B cell (primary cell): ENCODE measurements at regions of chr7 and their contacts with region 1.

Region 1: DNA sequence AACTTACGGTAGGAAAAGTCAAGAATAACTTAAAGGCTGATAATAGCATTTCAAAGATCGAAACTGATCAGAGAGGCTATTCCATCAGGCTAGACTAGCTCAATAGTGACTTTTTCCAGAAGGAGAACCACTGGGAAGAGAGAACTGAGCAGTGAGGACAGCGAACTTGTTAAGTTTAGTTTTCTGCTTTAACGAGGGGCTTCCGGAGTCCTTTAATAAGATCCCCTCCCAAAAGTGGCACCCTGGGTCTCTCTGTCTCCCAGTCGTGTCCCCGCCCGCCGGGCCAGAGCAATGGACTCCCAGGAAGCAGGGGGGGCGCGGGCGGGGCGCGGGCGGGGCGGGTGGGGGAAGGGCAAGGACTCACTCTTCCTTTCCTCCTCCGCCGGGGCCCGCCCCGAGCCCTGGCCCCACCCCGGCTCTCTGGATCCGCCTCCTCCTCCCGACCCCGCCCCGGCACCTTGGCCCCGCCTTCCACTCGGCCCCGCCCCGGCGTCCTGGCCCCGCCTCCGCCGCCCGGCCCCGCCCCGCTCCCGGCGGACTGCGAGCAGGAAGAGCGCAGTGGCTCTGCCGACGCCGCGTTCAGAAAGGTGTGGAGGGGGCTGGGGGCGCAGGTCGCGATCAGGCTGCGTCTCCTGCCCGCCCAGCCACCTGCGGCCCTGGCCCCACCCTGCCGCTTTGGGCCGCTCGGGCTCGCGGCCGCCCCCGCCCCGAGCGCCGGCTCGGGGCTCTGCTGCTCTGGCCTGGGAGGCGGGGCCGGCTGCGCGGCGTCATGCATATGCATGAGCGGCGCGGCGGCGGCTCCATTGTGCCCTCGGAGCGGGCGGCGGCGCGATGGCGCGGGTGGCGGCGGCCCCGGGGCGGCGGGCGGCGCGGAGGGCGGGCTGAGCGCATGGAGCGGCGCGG is at the start of gene ZMIZ2:
- DNase-seq: peak; percentile 96
- ATAC-seq: peak; percentile 80
- H3K4me3 ChIP-seq: peak within 1 kb of the TSS; percentile 61 to 89 (median 74)
- H3K4me3 Mint-ChIP-seq: peak within 1 kb of the TSS; percentile 88
- H3K27ac ChIP-seq: peak within 1 kb of the TSS; percentile 96 to 97
- H3K27ac Mint-ChIP-seq: peak within 1 kb of the TSS; percentile 97
- H3K4me1 ChIP-seq: peaks cover 43 to 48% of the 10 kb centered on the region in 2 donors
- H3K4me1 Mint-ChIP-seq: peaks cover 51% of the 10 kb centered on the region
- H3K27me3 ChIP-seq: no peaks in the 10 kb centered on the region
- H3K27me3 Mint-ChIP-seq: no peaks in the 10 kb centered on the region
- CTCF ChIP-seq: no peak
- total RNA-seq, gene ZMIZ2: 442 and 446 TPM in 2 replicates

Region 2: GRCh38 chr7:44375236-44375699 is 373.0 kb before region 1 on chr7:
- CTCF ChIA-PET with region 1: no interaction called
- POLR2A ChIA-PET with region 1: no interaction called
- intact Hi-C with region 1: no loop called
- DNase-seq: no peak
- ATAC-seq: no peak
- H3K4me3 ChIP-seq: no peak overlapping the region
- H3K4me3 Mint-ChIP-seq: no peak overlapping the region
- H3K27ac ChIP-seq: no peak overlapping the region
- H3K27ac Mint-ChIP-seq: no peak overlapping the region
- H3K4me1 ChIP-seq: peaks cover 5 to 11% of the 10 kb centered on the region in 2 donors
- H3K4me1 Mint-ChIP-seq: peaks cover 11% of the 10 kb centered on the region
- H3K27me3 ChIP-seq: no peaks in the 10 kb centered on the region
- H3K27me3 Mint-ChIP-seq: peaks cover 10% of the 10 kb centered on the region
- CTCF ChIP-seq: no peak

Region 3: DNA sequence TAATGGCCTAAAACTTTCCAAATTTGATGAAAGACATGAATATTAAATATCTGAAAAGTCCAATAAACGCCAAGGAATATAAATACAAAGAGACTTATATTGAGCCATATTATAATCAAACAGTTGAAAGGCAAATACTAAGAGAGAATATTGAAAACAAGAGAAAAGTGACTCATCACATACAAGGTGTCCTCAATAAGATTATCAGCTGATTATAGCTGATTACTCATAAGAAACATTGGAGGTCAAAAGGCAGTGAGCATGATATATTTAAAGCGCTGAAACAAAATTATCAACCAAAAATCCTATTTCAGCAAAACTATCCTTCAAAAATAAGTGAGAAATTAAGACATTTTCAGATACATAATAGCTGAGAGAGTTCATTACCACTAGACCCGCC is 199.4 kb before region 1 on chr7:
- CTCF ChIA-PET with region 1: no interaction called
- POLR2A ChIA-PET with region 1: no interaction called
- intact Hi-C with region 1: no loop called
- DNase-seq: no peak
- ATAC-seq: no peak
- H3K4me3 ChIP-seq: no peak overlapping the region
- H3K4me3 Mint-ChIP-seq: no peak overlapping the region
- H3K27ac ChIP-seq: no peak overlapping the region
- H3K27ac Mint-ChIP-seq: no peak overlapping the region
- H3K4me1 ChIP-seq: no peaks in the 10 kb centered on the region
- H3K4me1 Mint-ChIP-seq: no peaks in the 10 kb centered on the region
- H3K27me3 ChIP-seq: peaks cover 0 to 8% (median 2%) of the 10 kb centered on the region in 4 experiments
- H3K27me3 Mint-ChIP-seq: peaks cover 20% of the 10 kb centered on the region
- CTCF ChIP-seq: no peak

Region 4: GRCh38 chr7:44573464-44574286 is 174.6 kb before region 1 on chr7 and contains the start of gene DDX56:
- CTCF ChIA-PET with region 1: interaction called, 4 read pairs
- POLR2A ChIA-PET with region 1: interaction called, 5 read pairs
- intact Hi-C with region 1: loop called (anchors 2 kb)
- DNase-seq: peak; percentile 94
- ATAC-seq: peak; percentile 97
- H3K4me3 ChIP-seq: peak within 1 kb of the TSS; percentile 60 to 94 (median 84)
- H3K4me3 Mint-ChIP-seq: peak within 1 kb of the TSS; percentile 98
- H3K27ac ChIP-seq: peak within 1 kb of the TSS; percentile 84 to 93
- H3K27ac Mint-ChIP-seq: peak within 1 kb of the TSS; percentile 97
- H3K4me1 ChIP-seq: peaks cover 23 to 29% of the 10 kb centered on the region in 2 donors
- H3K4me1 Mint-ChIP-seq: peaks cover 38% of the 10 kb centered on the region
- H3K27me3 ChIP-seq: no peaks in the 10 kb centered on the region
- H3K27me3 Mint-ChIP-seq: no peaks in the 10 kb centered on the region
- CTCF ChIP-seq: no peak
- total RNA-seq, gene DDX56: 102 and 104 TPM in 2 replicates

Region 5: DNA sequence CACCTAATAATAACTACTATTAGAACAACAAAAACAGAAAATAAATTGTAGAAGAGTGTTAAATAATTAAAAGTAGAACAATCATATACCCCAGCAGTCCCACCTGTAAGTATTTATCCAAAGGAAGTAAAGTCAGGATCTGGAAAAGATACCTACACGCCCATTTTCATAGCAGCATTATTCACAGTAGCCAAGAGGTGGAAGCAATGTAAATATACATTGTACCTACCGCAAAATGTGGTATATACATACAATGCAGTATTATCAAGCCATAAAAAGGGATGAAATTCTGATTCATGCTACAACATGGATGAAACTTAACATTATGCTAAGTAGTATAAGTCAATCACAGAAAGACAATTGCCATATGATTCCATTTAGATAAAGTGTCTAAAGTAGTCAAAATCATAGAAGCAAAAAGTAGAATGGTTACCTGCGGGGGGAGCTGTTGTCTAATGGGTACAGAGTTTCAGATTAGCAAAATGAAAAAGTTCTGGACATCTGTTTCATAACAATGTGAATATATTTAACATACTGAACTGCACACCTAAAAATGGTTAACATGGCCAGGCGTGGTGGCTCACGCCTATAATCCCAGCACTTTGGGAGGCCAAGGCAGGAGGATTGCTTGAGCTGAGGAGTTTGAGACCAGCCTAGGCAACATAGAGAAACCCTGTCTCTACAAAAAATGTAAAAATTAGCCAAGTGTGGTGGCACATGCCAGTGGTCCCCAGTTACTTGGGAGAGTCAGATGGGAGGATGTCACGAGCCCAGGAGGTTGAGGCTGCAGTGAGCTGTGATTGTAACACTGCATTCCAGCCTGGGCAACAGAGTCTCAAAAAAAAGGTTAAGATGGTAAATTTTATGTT is 160.2 kb before region 1 on chr7:
- CTCF ChIA-PET with region 1: interaction called, 3 read pairs
- POLR2A ChIA-PET with region 1: interaction called, 5 read pairs
- intact Hi-C with region 1: loop called (anchors 1 kb)
- DNase-seq: peak; percentile 78
- ATAC-seq: peak; percentile 83
- H3K4me3 ChIP-seq: no peak overlapping the region
- H3K4me3 Mint-ChIP-seq: no peak overlapping the region
- H3K27ac ChIP-seq: no peak overlapping the region
- H3K27ac Mint-ChIP-seq: no peak overlapping the region
- H3K4me1 ChIP-seq: peaks cover 1 to 3% of the 10 kb centered on the region in 2 donors
- H3K4me1 Mint-ChIP-seq: peaks cover 5% of the 10 kb centered on the region
- H3K27me3 ChIP-seq: peaks cover 0 to 2% (median 0%) of the 10 kb centered on the region in 4 experiments
- H3K27me3 Mint-ChIP-seq: peaks cover 1% of the 10 kb centered on the region
- CTCF ChIP-seq: peak; percentile 86

Region 6: GRCh38 chr7:44638611-44639557 is 109.4 kb before region 1 on chr7:
- CTCF ChIA-PET with region 1: interaction called, 7 read pairs
- POLR2A ChIA-PET with region 1: interaction called, 12 read pairs
- intact Hi-C with region 1: loop called (anchors 2 kb)
- DNase-seq: peak; percentile 72
- ATAC-seq: peak; percentile 87
- H3K4me3 ChIP-seq: peak overlapping the region in 1 of 5 experiments; percentile 31
- H3K4me3 Mint-ChIP-seq: peak overlapping the region; percentile 84
- H3K27ac ChIP-seq: peak overlapping the region; percentile 83 to 93
- H3K27ac Mint-ChIP-seq: peak overlapping the region; percentile 99
- H3K4me1 ChIP-seq: peaks cover 44 to 69% of the 10 kb centered on the region in 2 donors
- H3K4me1 Mint-ChIP-seq: peaks cover 59% of the 10 kb centered on the region
- H3K27me3 ChIP-seq: no peaks in the 10 kb centered on the region
- H3K27me3 Mint-ChIP-seq: no peaks in the 10 kb centered on the region
- CTCF ChIP-seq: no peak

Region 7: DNA sequence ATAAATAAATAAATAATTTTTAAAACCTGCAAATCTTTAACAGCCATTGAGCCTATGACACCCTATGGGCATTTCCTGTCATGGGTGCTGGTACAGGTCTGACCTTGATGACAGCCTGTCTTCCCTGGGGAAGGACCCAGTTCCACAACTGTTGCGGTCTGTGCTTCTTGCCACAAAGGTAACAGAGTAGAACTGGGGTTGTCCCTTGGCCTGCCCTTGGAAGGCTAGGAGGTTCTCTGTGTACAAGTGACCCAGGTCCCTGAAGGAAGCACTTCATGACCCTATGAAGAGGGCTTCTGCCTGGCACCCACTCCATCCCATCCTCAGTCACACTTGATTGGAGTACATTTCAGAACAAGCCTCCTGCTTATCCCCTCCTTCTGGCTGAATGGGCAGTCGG is 75.0 kb before region 1 on chr7:
- CTCF ChIA-PET with region 1: no interaction called
- POLR2A ChIA-PET with region 1: no interaction called
- intact Hi-C with region 1: no loop called
- DNase-seq: no peak
- ATAC-seq: no peak
- H3K4me3 ChIP-seq: no peak overlapping the region
- H3K4me3 Mint-ChIP-seq: no peak overlapping the region
- H3K27ac ChIP-seq: no peak overlapping the region
- H3K27ac Mint-ChIP-seq: no peak overlapping the region
- H3K4me1 ChIP-seq: no peaks in the 10 kb centered on the region
- H3K4me1 Mint-ChIP-seq: no peaks in the 10 kb centered on the region
- H3K27me3 ChIP-seq: no peaks in the 10 kb centered on the region
- H3K27me3 Mint-ChIP-seq: no peaks in the 10 kb centered on the region
- CTCF ChIP-seq: no peak

Region 8: DNA sequence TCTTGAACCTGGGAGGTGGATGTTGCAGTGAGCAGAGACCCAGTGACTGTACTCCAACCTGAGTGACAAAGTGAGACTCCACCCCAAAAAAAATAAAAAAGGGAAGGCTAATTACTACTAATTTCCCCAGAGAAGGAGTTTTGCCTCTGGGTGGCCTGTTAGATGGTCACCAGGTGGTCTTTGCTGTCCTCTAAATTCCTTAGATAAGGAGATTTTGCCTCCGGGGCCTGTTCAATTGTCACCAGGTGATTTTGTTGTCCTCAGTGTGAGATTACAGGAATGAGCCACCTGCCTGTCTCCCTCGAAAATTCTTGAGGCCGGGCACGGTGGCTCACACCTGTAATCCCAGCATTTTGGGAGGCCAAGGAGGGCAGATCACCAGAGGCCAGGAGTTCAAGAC is 24.0 kb before region 1 on chr7:
- CTCF ChIA-PET with region 1: no interaction called
- POLR2A ChIA-PET with region 1: no interaction called
- intact Hi-C with region 1: no loop called
- DNase-seq: no peak
- ATAC-seq: no peak
- H3K4me3 ChIP-seq: no peak overlapping the region
- H3K4me3 Mint-ChIP-seq: no peak overlapping the region
- H3K27ac ChIP-seq: no peak overlapping the region
- H3K27ac Mint-ChIP-seq: no peak overlapping the region
- H3K4me1 ChIP-seq: no peaks in the 10 kb centered on the region
- H3K4me1 Mint-ChIP-seq: no peaks in the 10 kb centered on the region
- H3K27me3 ChIP-seq: no peaks in the 10 kb centered on the region
- H3K27me3 Mint-ChIP-seq: peaks cover 6% of the 10 kb centered on the region
- CTCF ChIP-seq: no peak

Region 9: DNA sequence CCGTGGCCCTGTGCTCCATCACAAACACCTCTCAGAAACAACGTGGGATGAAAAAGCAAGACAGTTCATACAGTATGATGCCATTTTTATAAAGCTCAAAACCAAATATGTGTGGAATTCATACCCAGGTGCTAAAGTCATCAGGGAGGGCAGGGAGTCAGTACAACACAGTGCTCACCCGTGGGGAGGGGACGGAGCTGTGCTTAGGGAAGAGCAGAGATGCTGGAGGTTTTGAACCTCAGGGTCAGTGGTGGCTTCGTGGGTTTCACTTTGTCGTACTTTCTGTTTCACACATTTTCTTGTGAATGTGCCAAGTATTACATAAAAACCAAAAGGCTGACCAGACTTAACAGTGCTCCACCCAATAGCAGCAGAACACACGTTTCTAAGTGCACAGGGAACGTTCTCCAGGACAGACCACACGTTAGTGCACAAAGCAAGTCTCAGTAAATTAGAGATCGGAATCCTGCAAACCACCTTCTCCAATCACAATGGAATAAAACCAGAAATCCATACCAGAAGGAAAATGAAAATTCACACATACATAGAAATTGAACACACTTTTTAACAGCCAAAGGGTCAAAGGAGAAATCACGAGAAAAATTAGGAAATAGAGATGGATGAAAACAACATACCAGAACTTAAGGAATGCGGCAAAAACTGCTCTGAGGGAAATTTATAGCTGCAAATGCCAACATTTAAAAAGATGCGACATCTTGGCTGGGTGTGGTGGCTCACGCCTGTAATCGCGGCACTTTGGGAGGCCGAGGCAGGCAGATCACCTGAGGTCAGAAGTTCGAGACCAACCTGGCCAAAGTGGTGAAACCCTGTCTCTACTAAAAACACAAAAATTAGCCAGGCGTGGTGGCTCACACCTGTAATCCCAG is 21.7 kb after region 1 on chr7:
- CTCF ChIA-PET with region 1: interaction called, 37 read pairs
- POLR2A ChIA-PET with region 1: interaction called, 29 read pairs
- intact Hi-C with region 1: loop called (anchors 1 kb)
- DNase-seq: peak; percentile 49
- ATAC-seq: peak; percentile 26
- H3K4me3 ChIP-seq: peak overlapping the region in 1 of 5 experiments; percentile 7
- H3K4me3 Mint-ChIP-seq: peak overlapping the region; percentile 51
- H3K27ac ChIP-seq: peak overlapping the region; percentile 73 to 77
- H3K27ac Mint-ChIP-seq: peak overlapping the region; percentile 97
- H3K4me1 ChIP-seq: peaks cover 31 to 62% of the 10 kb centered on the region in 2 donors
- H3K4me1 Mint-ChIP-seq: peaks cover 55% of the 10 kb centered on the region
- H3K27me3 ChIP-seq: no peaks in the 10 kb centered on the region
- H3K27me3 Mint-ChIP-seq: no peaks in the 10 kb centered on the region
- CTCF ChIP-seq: no peak

Region 10: GRCh38 chr7:44986218-44987053 is 238.1 kb after region 1 on chr7:
- CTCF ChIA-PET with region 1: no interaction called
- POLR2A ChIA-PET with region 1: no interaction called
- intact Hi-C with region 1: loop called (anchors 5 kb)
- DNase-seq: peak; percentile 98
- ATAC-seq: peak; percentile 94
- H3K4me3 ChIP-seq: peak overlapping the region; percentile 62 to 92 (median 73)
- H3K4me3 Mint-ChIP-seq: peak overlapping the region; percentile 98
- H3K27ac ChIP-seq: peak overlapping the region; percentile 97 to 98
- H3K27ac Mint-ChIP-seq: peak overlapping the region; percentile 98
- H3K4me1 ChIP-seq: peaks cover 29 to 39% of the 10 kb centered on the region in 2 donors
- H3K4me1 Mint-ChIP-seq: peaks cover 51% of the 10 kb centered on the region
- H3K27me3 ChIP-seq: no peaks in the 10 kb centered on the region
- H3K27me3 Mint-ChIP-seq: no peaks in the 10 kb centered on the region
- CTCF ChIP-seq: no peak